ENCODE measurements at regions of chr15 and their contacts with region 1.

Region 1: DNA sequence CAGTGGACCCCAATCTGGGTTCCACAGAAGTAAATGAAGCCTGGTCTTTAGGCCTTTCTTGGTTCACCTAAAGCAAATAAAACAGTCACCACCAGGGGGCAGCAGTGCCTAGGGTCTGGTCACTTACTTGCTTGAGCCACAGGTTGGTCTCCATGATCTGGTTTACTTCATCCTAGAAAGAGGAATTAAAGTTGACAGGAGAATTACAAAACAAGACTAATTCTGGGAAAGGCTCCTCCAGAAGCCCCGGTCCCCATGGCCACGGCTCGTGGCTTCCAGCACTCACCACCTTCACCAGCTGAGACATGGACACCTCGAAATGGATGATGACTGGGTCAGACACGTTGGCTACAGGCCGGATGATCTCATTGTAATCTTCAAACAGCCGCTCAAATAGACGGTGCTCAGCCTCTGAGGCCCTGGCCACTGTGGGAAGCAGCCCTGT is 2.3 kb downstream of the CHRNA3 start:
- DNase-seq: peak; percentile 90
- ATAC-seq: peak; percentile 49
- H3K4me3 Mint-ChIP-seq: no peak overlapping the region
- H3K27ac Mint-ChIP-seq: no peak overlapping the region
- H3K4me1 Mint-ChIP-seq: peaks cover 11% of the 10 kb centered on the region
- H3K27me3 Mint-ChIP-seq: peaks cover 33% of the 10 kb centered on the region

Region 2: GRCh38 chr15:78108299-78109084 is 510.0 kb before region 1 on chr15:
- CTCF ChIA-PET with region 1: no interaction called
- POLR2A ChIA-PET with region 1: no interaction called
- intact Hi-C with region 1: no loop called
- DNase-seq: peak; percentile 92
- ATAC-seq: peak; percentile 74
- H3K4me3 Mint-ChIP-seq: no peak overlapping the region
- H3K27ac Mint-ChIP-seq: no peak overlapping the region
- H3K4me1 Mint-ChIP-seq: peaks cover 32% of the 10 kb centered on the region
- H3K27me3 Mint-ChIP-seq: no peaks in the 10 kb centered on the region

Region 3: GRCh38 chr15:78709263-78709882 is 90.9 kb after region 1 on chr15:
- CTCF ChIA-PET with region 1: interaction called, 13 read pairs
- POLR2A ChIA-PET with region 1: no interaction called
- intact Hi-C with region 1: loop called (anchors 1 kb)
- DNase-seq: peak; percentile 84
- ATAC-seq: peak; percentile 98
- H3K4me3 Mint-ChIP-seq: no peak overlapping the region
- H3K27ac Mint-ChIP-seq: no peak overlapping the region
- H3K4me1 Mint-ChIP-seq: no peaks in the 10 kb centered on the region
- H3K27me3 Mint-ChIP-seq: peaks cover 27% of the 10 kb centered on the region

Region 4: DNA sequence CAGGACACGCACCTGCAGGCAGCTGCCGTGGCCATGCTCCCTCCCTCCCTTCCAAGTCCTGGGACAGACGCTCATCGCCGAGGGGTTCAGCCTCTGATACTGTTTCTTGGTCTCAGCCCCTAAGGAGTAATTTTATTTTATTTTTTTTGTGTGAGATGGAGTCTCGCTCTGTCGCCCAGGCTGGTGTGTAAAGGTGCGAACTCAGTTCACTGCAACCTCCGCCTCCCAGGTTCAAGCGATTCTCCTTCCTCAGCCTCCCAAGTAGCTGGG is 139.1 kb after region 1 on chr15:
- CTCF ChIA-PET with region 1: no interaction called
- POLR2A ChIA-PET with region 1: no interaction called
- intact Hi-C with region 1: no loop called
- DNase-seq: no peak
- ATAC-seq: no peak
- H3K4me3 Mint-ChIP-seq: peak overlapping the region; percentile 6
- H3K27ac Mint-ChIP-seq: peak overlapping the region; percentile 89
- H3K4me1 Mint-ChIP-seq: peaks cover 31% of the 10 kb centered on the region
- H3K27me3 Mint-ChIP-seq: no peaks in the 10 kb centered on the region

Region 5: DNA sequence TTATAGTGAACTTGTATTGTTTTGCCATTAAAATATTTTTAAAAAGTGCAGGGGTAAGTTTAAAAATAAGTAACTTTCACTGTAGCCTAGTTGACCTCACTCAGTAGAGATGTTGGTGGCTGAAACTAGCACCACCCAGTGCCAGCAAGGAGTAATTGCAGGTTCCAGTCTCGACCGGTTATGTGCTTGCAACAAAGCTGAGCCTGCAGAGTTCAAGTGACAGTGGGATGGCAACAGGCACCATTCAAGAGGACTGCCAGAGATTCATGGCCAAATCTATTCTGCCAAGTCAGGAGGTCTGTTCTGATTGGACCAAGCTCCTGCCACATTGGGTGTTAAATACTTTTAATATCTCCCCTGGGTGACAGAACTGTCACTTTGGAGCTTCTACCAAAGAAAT is 190.0 kb after region 1 on chr15:
- CTCF ChIA-PET with region 1: interaction called, 3 read pairs
- POLR2A ChIA-PET with region 1: no interaction called
- intact Hi-C with region 1: loop called in 1 of 2 experiments (anchors 5 kb)
- DNase-seq: peak; percentile 54
- ATAC-seq: peak; percentile 72
- H3K4me3 Mint-ChIP-seq: no peak overlapping the region
- H3K27ac Mint-ChIP-seq: no peak overlapping the region
- H3K4me1 Mint-ChIP-seq: peaks cover 11% of the 10 kb centered on the region
- H3K27me3 Mint-ChIP-seq: peaks cover 32% of the 10 kb centered on the region

Measured in activated CD4-positive, alpha-beta T cell treated with anti-CD3 and anti-CD28 coated beads for 36 hours (primary cell).